Tibial artery (tissue), 4 donors: ENCODE measurements at regions of chr6 and their contacts with region 1.

Region 1: GRCh38 chr6:117976030-117976651 is 69.1 kb downstream of the SLC35F1 start:
- DNase-seq: no peak
- H3K4me3 ChIP-seq: no peak overlapping the region
- H3K27ac ChIP-seq: no peak overlapping the region
- H3K4me1 ChIP-seq: no peaks in the 10 kb centered on the region
- H3K27me3 ChIP-seq: no peaks in the 10 kb centered on the region
- CTCF ChIP-seq: peak; percentile 36 to 45

Region 2: DNA sequence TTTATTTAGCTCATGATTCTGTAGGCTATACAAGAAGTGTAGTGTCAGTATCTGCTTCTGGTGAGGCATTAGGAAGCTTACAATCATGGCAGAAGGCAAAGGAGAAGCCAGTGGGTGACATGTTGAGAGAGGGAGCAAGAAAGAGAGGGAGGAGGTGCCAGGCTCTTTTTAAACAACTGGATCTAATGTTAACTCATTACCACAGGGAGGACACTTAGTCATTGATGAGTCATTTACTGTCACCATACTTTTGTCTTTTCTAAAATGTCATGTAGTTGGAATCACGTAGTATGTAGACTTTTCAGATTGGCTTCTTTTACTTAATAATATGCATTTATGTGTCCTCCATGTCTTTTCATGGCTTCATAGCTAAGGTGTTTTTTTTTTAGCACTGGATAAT is 242.8 kb before region 1 on chr6:
- intact Hi-C with region 1: no loop called
- DNase-seq: no peak
- H3K4me3 ChIP-seq: no peak overlapping the region
- H3K27ac ChIP-seq: no peak overlapping the region
- H3K4me1 ChIP-seq: no peaks in the 10 kb centered on the region
- H3K27me3 ChIP-seq: no peaks in the 10 kb centered on the region
- CTCF ChIP-seq: no peak

Region 3: DNA sequence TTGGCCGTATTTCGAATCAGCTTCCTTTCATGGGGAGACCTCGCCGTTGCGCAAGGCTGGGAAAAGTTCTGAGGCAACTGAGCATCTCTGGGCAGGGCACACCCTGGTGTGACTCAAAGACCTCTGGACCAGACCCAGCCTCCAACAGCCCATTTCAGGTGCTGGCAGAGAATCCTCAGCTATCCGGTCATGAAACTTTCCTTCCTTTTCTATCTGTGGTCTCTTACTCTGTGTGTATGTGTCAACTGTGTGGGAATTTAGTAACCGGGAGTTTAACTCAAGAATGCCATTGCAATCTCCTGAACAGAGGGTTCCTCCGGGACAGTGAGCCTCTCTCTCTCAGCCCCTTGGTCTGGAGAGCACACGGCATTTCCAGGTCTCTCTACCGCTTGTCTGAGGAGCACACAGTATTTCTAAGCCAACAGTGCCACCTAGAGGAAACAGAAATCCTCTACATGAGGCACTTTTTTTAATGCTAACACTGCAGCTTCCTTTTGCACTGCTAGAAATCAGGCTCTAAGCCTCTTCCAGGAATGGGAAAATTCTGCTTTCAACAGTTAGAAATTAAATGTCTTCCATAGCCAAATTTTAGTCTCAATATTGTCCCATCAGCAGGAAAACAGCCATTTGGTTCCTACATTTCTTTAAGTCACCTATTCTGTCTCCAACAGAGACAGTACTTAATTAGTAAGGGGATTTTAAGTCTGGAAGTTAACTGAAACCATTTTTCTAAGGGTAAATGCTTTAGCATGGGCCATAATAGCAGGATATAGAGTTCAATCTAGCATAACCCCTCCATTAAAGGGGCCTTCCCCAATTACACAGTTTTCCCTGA is 604.7 kb after region 1 on chr6:
- intact Hi-C with region 1: loop called (anchors 10 kb)
- DNase-seq: peak in 1 of 2 donors; percentile 41
- H3K4me3 ChIP-seq: no peak overlapping the region
- H3K27ac ChIP-seq: peak overlapping the region in 1 of 2 donors; percentile 10
- H3K4me1 ChIP-seq: peaks cover 0 to 19% (median 6%) of the 10 kb centered on the region in 4 donors
- H3K27me3 ChIP-seq: no peaks in the 10 kb centered on the region
- CTCF ChIP-seq: peak; percentile 67 to 90